Thyroid gland (tissue), 4 donors: ENCODE measurements at regions of chr11 and their contacts with region 1.

Region 1: DNA sequence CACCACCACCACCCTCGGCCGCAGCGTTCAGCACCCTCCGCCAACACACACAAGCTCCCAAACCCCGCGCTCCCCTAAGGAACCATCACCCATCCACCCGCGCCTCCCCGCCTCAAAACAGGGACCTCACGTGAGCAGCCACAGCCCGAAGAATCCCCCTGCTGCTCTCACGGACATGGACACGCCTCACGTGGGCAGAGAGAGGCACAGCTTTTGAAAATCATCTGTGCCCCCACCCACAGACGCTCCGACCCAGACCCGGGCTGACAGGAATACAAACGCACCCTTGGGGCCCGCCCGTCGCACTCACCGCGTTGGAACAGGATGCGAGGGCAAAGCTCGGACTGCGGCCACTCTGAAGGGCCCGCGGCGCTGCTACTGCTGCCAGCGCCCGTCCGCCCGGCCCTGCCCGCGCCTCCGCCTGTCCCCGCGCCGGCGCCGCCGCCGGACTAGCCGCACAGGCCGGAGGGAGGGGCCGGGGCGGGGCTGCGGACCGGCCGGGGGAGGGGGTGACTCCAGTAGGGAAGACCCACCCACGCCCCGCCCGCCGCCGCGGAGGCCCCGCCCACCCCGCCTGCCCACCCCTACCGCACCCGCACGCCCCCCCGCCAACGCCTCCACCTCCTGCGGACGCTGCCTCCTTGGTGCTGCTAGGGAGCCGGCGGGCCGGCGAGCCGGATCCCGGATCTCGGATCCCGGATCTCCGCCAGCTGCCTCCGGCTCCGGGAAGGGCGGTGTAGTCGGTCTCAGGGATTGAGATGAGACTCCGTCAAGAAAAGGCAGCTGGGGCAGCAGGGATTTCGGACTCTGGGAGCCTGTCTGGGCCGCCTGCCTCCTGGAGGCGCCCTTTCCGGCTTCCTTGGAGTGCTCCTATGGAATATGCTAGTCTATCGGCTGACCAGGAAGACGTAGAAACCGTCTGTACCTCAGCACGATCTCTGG is at the start of gene TRIM3:
- DNase-seq: peak; percentile 95 to 96
- H3K4me3 ChIP-seq: peak within 1 kb of the TSS; percentile 69 to 76 (median 74)
- H3K27ac ChIP-seq: peak within 1 kb of the TSS; percentile 81 to 92 (median 90)
- H3K4me1 ChIP-seq: peaks cover 11 to 18% of the 10 kb centered on the region in 2 donors
- H3K27me3 ChIP-seq: no peaks in the 10 kb centered on the region
- CTCF ChIP-seq: peak in 1 of 6 experiments; percentile 17
- POLR2A ChIP-seq: peak; percentile 74 to 84
- total RNA-seq, gene TRIM3: 11.0 to 20.8 (median 14.6) TPM

Region 2: GRCh38 chr11:6234387-6235107 is 239.2 kb before region 1 on chr11 and contains the start of gene FHIP1B:
- intact Hi-C with region 1: loop called (anchors 10 kb)
- DNase-seq: peak; percentile 100
- H3K4me3 ChIP-seq: peak within 1 kb of the TSS; percentile 75 to 83 (median 78)
- H3K27ac ChIP-seq: peak within 1 kb of the TSS; percentile 58 to 80 (median 80)
- H3K4me1 ChIP-seq: peaks cover 12 to 15% of the 10 kb centered on the region in 2 donors
- H3K27me3 ChIP-seq: no peaks in the 10 kb centered on the region
- CTCF ChIP-seq: no peak
- POLR2A ChIP-seq: peak in 1 of 2 donors; percentile 64
- total RNA-seq, gene FHIP1B: 37.1 to 60.8 (median 43.6) TPM

Region 3: GRCh38 chr11:6682936-6683861 is 209.4 kb after region 1 on chr11 and contains the start of gene MRPL17:
- intact Hi-C with region 1: loop called (anchors 10 kb)
- DNase-seq: peak; percentile 99
- H3K4me3 ChIP-seq: peak within 1 kb of the TSS; percentile 29 to 85 (median 84)
- H3K27ac ChIP-seq: peak within 1 kb of the TSS; percentile 80 to 90 (median 86)
- H3K4me1 ChIP-seq: peaks cover 5 to 11% of the 10 kb centered on the region in 2 donors
- H3K27me3 ChIP-seq: no peaks in the 10 kb centered on the region
- CTCF ChIP-seq: peak; percentile 77 to 97 (median 88)
- POLR2A ChIP-seq: peak; percentile 31 to 79
- total RNA-seq, gene MRPL17: 37.8 to 579 (median 144) TPM